ENCODE measurements at regions of chr6 and their contacts with region 1.

Region 1: GRCh38 chr6:73695619-73696421 is at the start of gene CD109:
- DNase-seq: peak; percentile 88
- ATAC-seq: peak; percentile 86
- H3K4me3 Mint-ChIP-seq: peak within 1 kb of the TSS; percentile 81
- H3K27ac Mint-ChIP-seq: peak within 1 kb of the TSS; percentile 96
- H3K4me1 Mint-ChIP-seq: peaks cover 44% of the 10 kb centered on the region
- H3K27me3 Mint-ChIP-seq: peaks cover 8% of the 10 kb centered on the region
- total RNA-seq, gene CD109: 13.2 to 15.8 TPM

Region 2: GRCh38 chr6:73580247-73581149 is 115.3 kb before region 1 on chr6:
- CTCF ChIA-PET with region 1: no interaction called
- POLR2A ChIA-PET with region 1: no interaction called
- intact Hi-C with region 1: loop called in 1 of 2 experiments (anchors 1 kb)
- DNase-seq: peak; percentile 89
- ATAC-seq: peak; percentile 92
- H3K4me3 Mint-ChIP-seq: peak overlapping the region; percentile 60
- H3K27ac Mint-ChIP-seq: peak overlapping the region; percentile 99
- H3K4me1 Mint-ChIP-seq: peaks cover 29% of the 10 kb centered on the region
- H3K27me3 Mint-ChIP-seq: no peaks in the 10 kb centered on the region

Region 3: GRCh38 chr6:73585566-73586415 is 110.0 kb before region 1 on chr6:
- CTCF ChIA-PET with region 1: interaction called, 3 read pairs
- POLR2A ChIA-PET with region 1: no interaction called
- intact Hi-C with region 1: loop called in 1 of 2 experiments (anchors 1 kb)
- DNase-seq: peak; percentile 55
- ATAC-seq: peak; percentile 79
- H3K4me3 Mint-ChIP-seq: peak overlapping the region; percentile 73
- H3K27ac Mint-ChIP-seq: peak overlapping the region; percentile 99
- H3K4me1 Mint-ChIP-seq: peaks cover 18% of the 10 kb centered on the region
- H3K27me3 Mint-ChIP-seq: no peaks in the 10 kb centered on the region

Region 4: GRCh38 chr6:73644941-73645591 is 50.8 kb before region 1 on chr6:
- CTCF ChIA-PET with region 1: no interaction called
- POLR2A ChIA-PET with region 1: no interaction called
- intact Hi-C with region 1: no loop called
- DNase-seq: no peak
- ATAC-seq: peak; percentile 39
- H3K4me3 Mint-ChIP-seq: peak overlapping the region; percentile 77
- H3K27ac Mint-ChIP-seq: peak overlapping the region; percentile 70
- H3K4me1 Mint-ChIP-seq: peaks cover 14% of the 10 kb centered on the region
- H3K27me3 Mint-ChIP-seq: no peaks in the 10 kb centered on the region

Region 5: GRCh38 chr6:73675466-73676098 is 20.2 kb before region 1 on chr6:
- CTCF ChIA-PET with region 1: interaction called, 32 read pairs
- POLR2A ChIA-PET with region 1: no interaction called
- intact Hi-C with region 1: loop called (anchors 2 kb)
- DNase-seq: peak; percentile 85
- ATAC-seq: peak; percentile 96
- H3K4me3 Mint-ChIP-seq: no peak overlapping the region
- H3K27ac Mint-ChIP-seq: no peak overlapping the region
- H3K4me1 Mint-ChIP-seq: peaks cover 1% of the 10 kb centered on the region
- H3K27me3 Mint-ChIP-seq: peaks cover 13% of the 10 kb centered on the region

Region 6: GRCh38 chr6:73722318-73723060 is 26.7 kb after region 1 on chr6:
- CTCF ChIA-PET with region 1: interaction called, 5 read pairs
- POLR2A ChIA-PET with region 1: interaction called, 3 read pairs
- intact Hi-C with region 1: loop called (anchors 1 kb)
- DNase-seq: peak; percentile 55
- ATAC-seq: peak; percentile 95
- H3K4me3 Mint-ChIP-seq: no peak overlapping the region
- H3K27ac Mint-ChIP-seq: peak overlapping the region; percentile 74
- H3K4me1 Mint-ChIP-seq: peaks cover 35% of the 10 kb centered on the region
- H3K27me3 Mint-ChIP-seq: no peaks in the 10 kb centered on the region